CD4-positive, alpha-beta T cell (primary cell): ENCODE measurements at regions of chr5 and their contacts with region 1.

Region 1: DNA sequence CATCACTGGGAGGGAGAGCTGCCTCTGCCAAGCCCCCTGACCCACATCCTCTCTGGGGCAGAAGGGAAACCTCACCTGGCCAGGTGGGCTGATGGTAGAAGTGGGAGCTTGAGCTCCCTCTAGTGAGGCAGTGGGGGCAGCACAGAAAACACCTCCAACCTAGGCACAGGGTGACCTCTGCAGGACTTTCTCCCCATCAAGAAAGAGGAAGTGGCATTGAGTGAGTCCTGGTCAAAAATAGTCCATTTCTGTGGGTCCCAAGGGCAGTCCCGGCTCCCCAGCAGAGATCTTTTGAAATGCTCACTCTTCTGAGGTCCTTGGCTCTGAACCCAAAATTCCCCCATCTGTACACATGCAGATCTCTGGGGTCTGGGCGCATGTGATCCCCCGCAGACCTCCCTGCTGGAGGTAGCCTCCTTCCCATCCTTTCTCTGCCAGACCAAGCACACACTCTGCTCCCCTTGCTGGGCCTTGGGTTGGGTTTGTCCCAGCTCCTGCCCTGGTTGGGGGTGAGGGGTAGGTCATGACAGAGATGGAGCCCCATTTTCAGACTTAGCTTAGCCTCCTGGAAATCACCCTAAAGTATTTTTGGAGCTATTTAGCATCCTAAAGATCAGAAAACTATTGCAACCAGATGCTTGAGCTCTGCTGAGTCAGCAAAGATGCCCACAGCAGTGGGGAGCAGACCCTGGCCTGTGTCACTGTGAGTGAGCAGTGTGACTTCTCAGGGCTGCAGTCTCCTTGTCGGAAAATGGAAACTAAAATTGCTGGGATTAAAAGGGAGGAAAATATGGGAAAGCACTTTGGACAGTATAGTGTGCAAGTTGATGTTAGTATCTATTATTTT is 41.6 kb upstream of the LCP2 start:
- DNase-seq: peak; percentile 49 to 88 (median 66)
- ATAC-seq: peak; percentile 81
- H3K4me3 ChIP-seq: no peak overlapping the region
- H3K4me3 Mint-ChIP-seq: no peak overlapping the region
- H3K27ac ChIP-seq: no peak overlapping the region
- H3K27ac Mint-ChIP-seq: no peak overlapping the region
- H3K4me1 ChIP-seq: peaks cover 50% of the 10 kb centered on the region
- H3K4me1 Mint-ChIP-seq: peaks cover 40% of the 10 kb centered on the region
- H3K27me3 ChIP-seq: no peaks in the 10 kb centered on the region
- H3K27me3 Mint-ChIP-seq: no peaks in the 10 kb centered on the region
- CTCF ChIP-seq: peak; percentile 98

Region 2: GRCh38 chr5:170092455-170093101 is 246.6 kb before region 1 on chr5:
- CTCF ChIA-PET with region 1: no interaction called
- POLR2A ChIA-PET with region 1: no interaction called
- intact Hi-C with region 1: no loop called
- DNase-seq: no peak
- ATAC-seq: no peak
- H3K4me3 ChIP-seq: no peak overlapping the region
- H3K4me3 Mint-ChIP-seq: no peak overlapping the region
- H3K27ac ChIP-seq: no peak overlapping the region
- H3K27ac Mint-ChIP-seq: no peak overlapping the region
- H3K4me1 ChIP-seq: no peaks in the 10 kb centered on the region
- H3K4me1 Mint-ChIP-seq: peaks cover 6% of the 10 kb centered on the region
- H3K27me3 ChIP-seq: no peaks in the 10 kb centered on the region
- H3K27me3 Mint-ChIP-seq: peaks cover 1% of the 10 kb centered on the region
- CTCF ChIP-seq: no peak

Region 3: GRCh38 chr5:170225326-170226128 is 113.6 kb before region 1 on chr5:
- CTCF ChIA-PET with region 1: interaction called, 54 read pairs
- POLR2A ChIA-PET with region 1: interaction called, 10 read pairs
- intact Hi-C with region 1: loop called (anchors 1 kb)
- DNase-seq: peak; percentile 63 to 88 (median 75)
- ATAC-seq: peak; percentile 66
- H3K4me3 ChIP-seq: no peak overlapping the region
- H3K4me3 Mint-ChIP-seq: no peak overlapping the region
- H3K27ac ChIP-seq: no peak overlapping the region
- H3K27ac Mint-ChIP-seq: no peak overlapping the region
- H3K4me1 ChIP-seq: peaks cover 4% of the 10 kb centered on the region
- H3K4me1 Mint-ChIP-seq: peaks cover 4% of the 10 kb centered on the region
- H3K27me3 ChIP-seq: no peaks in the 10 kb centered on the region
- H3K27me3 Mint-ChIP-seq: no peaks in the 10 kb centered on the region
- CTCF ChIP-seq: peak; percentile 93

Region 4: DNA sequence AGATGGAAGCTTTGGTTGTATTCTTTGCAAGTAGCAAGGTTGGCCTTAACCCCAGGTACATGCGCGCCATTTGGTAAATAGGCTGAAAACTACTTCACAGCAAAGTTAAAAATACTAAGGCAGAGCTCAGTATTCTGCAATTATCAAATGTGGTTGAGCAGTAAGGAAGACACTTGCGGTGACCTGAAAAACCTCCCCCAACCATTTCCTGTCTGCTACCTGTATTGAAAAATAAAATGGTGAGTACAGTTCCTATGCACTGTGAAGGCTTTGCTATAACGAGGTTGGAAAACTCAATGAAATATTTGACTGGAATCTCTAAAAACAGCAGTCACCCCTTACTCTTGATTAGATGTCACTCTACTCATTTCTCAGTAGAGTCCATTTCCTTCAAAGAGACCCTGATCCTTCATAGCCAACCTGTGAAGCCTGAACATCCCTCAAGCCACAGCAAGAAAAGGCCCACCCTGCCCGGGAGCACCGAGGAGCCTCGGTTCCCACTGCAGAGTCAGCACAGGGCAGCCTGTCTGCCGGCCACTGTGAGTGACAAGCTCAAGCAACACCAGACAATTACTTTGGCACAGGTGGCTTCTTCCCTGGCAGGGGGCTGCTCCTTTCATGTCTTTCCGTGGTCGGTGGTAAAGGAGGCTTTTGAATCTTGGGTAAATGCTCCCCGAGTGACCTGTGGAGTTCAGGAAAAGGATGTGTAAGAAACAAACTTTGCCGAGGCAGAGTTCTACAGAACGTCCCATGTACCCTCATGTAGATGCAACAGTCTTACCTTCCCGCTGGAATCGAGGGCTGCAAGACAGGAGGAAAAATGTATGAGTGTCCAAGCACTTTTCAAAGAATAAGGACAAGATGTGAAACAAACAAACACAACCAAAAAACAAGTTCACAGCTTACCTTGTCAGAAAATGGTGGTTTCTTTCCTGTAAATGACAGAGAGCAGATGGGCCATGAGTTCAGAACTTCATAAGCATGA is 76.8 kb before region 1 on chr5:
- CTCF ChIA-PET with region 1: interaction called, 32 read pairs
- POLR2A ChIA-PET with region 1: interaction called, 71 read pairs
- intact Hi-C with region 1: no loop called
- DNase-seq: peak in 9 of 14 experiments; percentile 40 to 88 (median 61)
- ATAC-seq: peak; percentile 88
- H3K4me3 ChIP-seq: peak overlapping the region; percentile 11
- H3K4me3 Mint-ChIP-seq: peak overlapping the region; percentile 52
- H3K27ac ChIP-seq: peak overlapping the region; percentile 62 to 88
- H3K27ac Mint-ChIP-seq: peak overlapping the region; percentile 96
- H3K4me1 ChIP-seq: peaks cover 63% of the 10 kb centered on the region
- H3K4me1 Mint-ChIP-seq: peaks cover 91% of the 10 kb centered on the region
- H3K27me3 ChIP-seq: no peaks in the 10 kb centered on the region
- H3K27me3 Mint-ChIP-seq: no peaks in the 10 kb centered on the region
- CTCF ChIP-seq: no peak

Region 5: GRCh38 chr5:170278611-170279452 is 60.3 kb before region 1 on chr5:
- CTCF ChIA-PET with region 1: interaction called, 73 read pairs
- POLR2A ChIA-PET with region 1: interaction called, 174 read pairs
- intact Hi-C with region 1: loop called (anchors 1 kb)
- DNase-seq: peak; percentile 76 to 95 (median 84)
- ATAC-seq: peak; percentile 67
- H3K4me3 ChIP-seq: peak overlapping the region; percentile 28
- H3K4me3 Mint-ChIP-seq: peak overlapping the region; percentile 85
- H3K27ac ChIP-seq: peak overlapping the region; percentile 63 to 92
- H3K27ac Mint-ChIP-seq: peak overlapping the region; percentile 96
- H3K4me1 ChIP-seq: peaks cover 98% of the 10 kb centered on the region
- H3K4me1 Mint-ChIP-seq: peaks cover 92% of the 10 kb centered on the region
- H3K27me3 ChIP-seq: no peaks in the 10 kb centered on the region
- H3K27me3 Mint-ChIP-seq: no peaks in the 10 kb centered on the region
- CTCF ChIP-seq: no peak

Region 6: DNA sequence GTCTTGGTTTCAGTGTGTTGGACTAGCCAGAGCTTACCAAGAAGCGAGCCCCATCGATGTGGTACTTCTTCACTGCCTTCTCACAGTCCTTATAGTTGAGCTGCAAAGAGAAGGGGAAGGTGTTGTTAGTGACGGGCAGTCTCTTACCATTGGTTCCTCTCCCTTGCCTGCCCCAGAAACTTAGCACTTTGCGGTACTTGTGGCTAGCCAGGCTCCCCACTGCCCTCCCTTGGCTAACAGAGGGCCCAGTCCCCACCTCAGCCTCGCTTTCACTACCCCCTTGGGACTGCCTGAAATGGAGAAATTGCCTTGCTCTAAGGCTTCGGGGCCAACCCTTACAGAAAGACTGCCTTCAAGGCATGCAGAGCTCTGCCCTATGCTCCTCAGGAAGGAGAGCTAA is 45.9 kb before region 1 on chr5:
- CTCF ChIA-PET with region 1: interaction called, 65 read pairs
- POLR2A ChIA-PET with region 1: interaction called, 236 read pairs
- intact Hi-C with region 1: loop called (anchors 1 to 2 kb)
- DNase-seq: peak in 5 of 14 experiments; percentile 39 to 83 (median 74)
- ATAC-seq: peak; percentile 10
- H3K4me3 ChIP-seq: peak overlapping the region; percentile 66
- H3K4me3 Mint-ChIP-seq: peak overlapping the region; percentile 98
- H3K27ac ChIP-seq: peak overlapping the region; percentile 49 to 98
- H3K27ac Mint-ChIP-seq: peak overlapping the region; percentile 96
- H3K4me1 ChIP-seq: peaks cover 66% of the 10 kb centered on the region
- H3K4me1 Mint-ChIP-seq: peaks cover 82% of the 10 kb centered on the region
- H3K27me3 ChIP-seq: no peaks in the 10 kb centered on the region
- H3K27me3 Mint-ChIP-seq: no peaks in the 10 kb centered on the region
- CTCF ChIP-seq: no peak

Region 7: DNA sequence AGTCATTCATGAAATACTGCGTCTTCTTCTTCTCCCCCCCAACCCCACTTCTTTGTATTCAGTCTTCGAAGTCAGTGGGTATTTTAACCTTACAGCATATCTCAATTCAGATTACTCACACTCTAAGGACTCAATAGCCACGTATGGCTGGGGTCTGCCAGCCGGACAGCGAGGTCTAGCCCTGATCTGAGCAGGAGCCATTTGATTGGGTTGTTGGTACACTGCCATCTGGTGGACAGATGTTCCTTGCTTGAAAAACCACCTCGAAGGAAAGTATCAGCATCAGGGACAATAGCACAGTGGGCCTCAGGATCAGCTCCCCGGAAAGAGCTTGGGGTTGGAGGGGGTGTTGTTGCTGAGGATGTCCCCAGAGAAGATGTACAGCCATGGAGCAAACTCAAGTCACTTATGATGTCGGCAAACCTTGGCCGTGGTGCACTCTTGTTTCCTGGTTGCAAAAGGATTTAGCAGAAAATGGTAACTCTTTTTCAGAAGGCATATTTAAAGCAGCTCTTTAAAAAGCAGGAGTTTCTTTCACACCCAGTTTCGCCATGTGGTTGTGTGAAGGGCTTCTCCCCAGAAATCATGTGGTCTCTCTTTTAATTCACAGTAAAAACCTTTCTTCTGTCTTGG is 81.7 kb after region 1 on chr5:
- CTCF ChIA-PET with region 1: interaction called, 4 read pairs
- POLR2A ChIA-PET with region 1: no interaction called
- intact Hi-C with region 1: loop called in 1 of 2 experiments (anchors 2 kb)
- DNase-seq: peak in 13 of 14 experiments; percentile 11 to 81 (median 39)
- ATAC-seq: peak; percentile 55
- H3K4me3 ChIP-seq: no peak overlapping the region
- H3K4me3 Mint-ChIP-seq: no peak overlapping the region
- H3K27ac ChIP-seq: no peak overlapping the region
- H3K27ac Mint-ChIP-seq: no peak overlapping the region
- H3K4me1 ChIP-seq: peaks cover 18% of the 10 kb centered on the region
- H3K4me1 Mint-ChIP-seq: peaks cover 21% of the 10 kb centered on the region
- H3K27me3 ChIP-seq: no peaks in the 10 kb centered on the region
- H3K27me3 Mint-ChIP-seq: no peaks in the 10 kb centered on the region
- CTCF ChIP-seq: peak; percentile 81

Region 8: GRCh38 chr5:170648541-170648940 is 309.4 kb after region 1 on chr5:
- CTCF ChIA-PET with region 1: no interaction called
- POLR2A ChIA-PET with region 1: no interaction called
- intact Hi-C with region 1: no loop called
- DNase-seq: no peak
- ATAC-seq: no peak
- H3K4me3 ChIP-seq: no peak overlapping the region
- H3K4me3 Mint-ChIP-seq: no peak overlapping the region
- H3K27ac ChIP-seq: no peak overlapping the region
- H3K27ac Mint-ChIP-seq: no peak overlapping the region
- H3K4me1 ChIP-seq: no peaks in the 10 kb centered on the region
- H3K4me1 Mint-ChIP-seq: no peaks in the 10 kb centered on the region
- H3K27me3 ChIP-seq: peaks cover 2 to 3% of the 10 kb centered on the region in 2 experiments
- H3K27me3 Mint-ChIP-seq: peaks cover 44% of the 10 kb centered on the region
- CTCF ChIP-seq: no peak